Heart right ventricle (tissue), 16 donors: ENCODE measurements at regions of chr2 and their contacts with region 1.

Region 1: GRCh38 chr2:27798948-27799645 is 27.6 kb downstream of the MRPL33 start:
- DNase-seq: peak in 1 of 2 donors; percentile 61
- ATAC-seq: peak in 7 of 8 donors; percentile 26 to 76 (median 60)
- H3K4me3 ChIP-seq: no peak overlapping the region
- H3K27ac ChIP-seq: peak overlapping the region in 9 of 10 donors; percentile 57 to 98 (median 91)
- H3K4me1 ChIP-seq: peaks cover 9 to 76% (median 55%) of the 10 kb centered on the region in 9 donors
- H3K27me3 ChIP-seq: no peaks in the 10 kb centered on the region
- CTCF ChIP-seq: no peak

Region 2: DNA sequence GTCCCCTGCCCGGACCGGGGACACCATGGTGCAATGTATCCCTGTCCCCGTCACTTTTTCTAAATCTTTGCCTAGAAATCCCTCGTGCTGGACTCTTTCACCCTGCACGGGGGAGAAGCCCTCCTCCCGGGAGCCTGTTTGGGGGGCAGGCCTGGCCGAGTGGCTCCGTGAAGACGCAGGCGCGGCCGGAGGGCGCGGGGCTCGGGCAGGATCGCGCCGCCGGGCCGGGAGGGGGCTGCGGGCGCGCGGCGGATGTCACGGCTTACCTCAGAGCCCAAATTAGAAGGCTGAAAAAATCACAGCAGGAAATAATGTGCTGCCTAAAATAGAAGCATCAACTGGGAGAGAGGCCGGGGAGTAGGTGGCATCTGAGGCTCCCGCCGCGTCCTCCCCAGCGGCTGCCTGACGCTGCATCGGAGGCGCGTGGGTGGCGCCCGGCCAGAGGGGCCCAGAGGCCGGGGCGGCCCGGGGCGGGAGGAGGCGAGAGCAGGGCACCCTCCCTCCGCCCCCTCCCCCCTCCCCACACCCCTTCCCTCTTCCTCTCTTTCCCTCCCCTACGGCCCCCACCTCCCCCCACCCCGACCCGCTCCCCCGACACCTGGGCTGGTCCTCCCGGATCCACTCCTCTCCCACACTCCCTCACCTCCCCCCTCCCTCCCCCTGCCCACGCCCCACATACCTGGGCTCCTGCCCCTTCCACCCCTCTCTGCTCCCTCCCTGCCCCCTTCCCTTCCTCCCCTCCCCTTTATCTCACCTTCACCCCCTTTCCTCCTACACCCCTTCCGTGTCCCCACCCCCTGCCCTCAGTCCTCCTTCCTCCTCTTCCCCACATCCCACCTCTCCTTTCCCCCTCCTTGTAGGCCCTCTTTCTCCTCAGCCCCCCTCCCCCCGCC is 83.5 kb before region 1 on chr2:
- intact Hi-C with region 1: loop called in 1 of 10 experiments (anchors 5 kb)
- DNase-seq: peak; percentile 75 to 82
- ATAC-seq: peak; percentile 88 to 91 (median 89)
- H3K4me3 ChIP-seq: peak overlapping the region; percentile 21 to 57 (median 50)
- H3K27ac ChIP-seq: peak overlapping the region; percentile 76 to 99 (median 93)
- H3K4me1 ChIP-seq: peaks cover 9 to 50% (median 27%) of the 10 kb centered on the region in 9 donors
- H3K27me3 ChIP-seq: peaks cover 0 to 28% (median 0%) of the 10 kb centered on the region in 7 donors
- CTCF ChIP-seq: no peak

Region 3: DNA sequence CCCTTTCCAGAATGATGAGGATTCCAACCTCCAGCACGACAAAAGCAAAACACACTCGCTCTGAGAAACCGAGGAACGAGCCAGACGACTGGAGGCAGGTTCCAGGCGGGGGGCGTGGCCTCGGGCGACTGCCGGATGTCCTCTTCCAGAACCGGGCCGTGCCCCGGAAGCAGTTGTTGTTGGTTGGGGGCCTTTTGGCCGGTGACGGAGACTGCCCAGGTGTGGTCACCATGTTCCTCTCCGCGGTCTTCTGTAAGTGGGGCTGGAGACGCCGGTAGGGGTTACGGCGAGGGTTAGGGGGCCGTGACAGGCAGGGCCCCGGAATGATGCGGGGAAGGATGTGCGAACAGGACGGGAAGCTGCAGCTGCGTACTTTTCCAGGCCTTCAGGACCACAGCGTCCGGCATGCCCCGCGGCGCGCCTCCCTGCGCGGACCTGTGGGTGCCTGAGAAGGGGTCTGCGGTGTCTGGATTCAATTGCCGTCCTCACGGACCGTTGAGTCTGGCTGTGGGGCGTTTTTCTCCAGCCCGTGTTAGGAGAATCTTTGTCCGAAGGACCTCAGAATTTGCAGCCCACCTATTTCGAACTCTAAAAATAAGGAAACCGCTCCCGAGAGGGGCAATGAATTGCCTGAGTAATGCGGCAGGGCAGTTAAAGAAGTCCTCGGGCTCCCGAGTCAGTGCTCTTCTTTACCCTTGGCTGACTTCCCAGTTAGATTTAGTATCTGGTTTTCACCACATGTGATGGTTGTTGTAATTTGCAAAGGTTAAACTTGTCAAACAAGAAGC is 27.4 kb before region 1 on chr2 and contains the start of gene MRPL33:
- intact Hi-C with region 1: loop called in 1 of 10 experiments (anchors 1 kb)
- DNase-seq: peak; percentile 95
- ATAC-seq: peak; percentile 97 to 98 (median 98)
- H3K4me3 ChIP-seq: peak within 1 kb of the TSS; percentile 50 to 90 (median 73)
- H3K27ac ChIP-seq: peak within 1 kb of the TSS; percentile 62 to 96 (median 92)
- H3K4me1 ChIP-seq: peaks cover 5 to 51% (median 41%) of the 10 kb centered on the region in 9 donors
- H3K27me3 ChIP-seq: no peaks in the 10 kb centered on the region
- CTCF ChIP-seq: no peak
- total RNA-seq, gene MRPL33: 170 to 416 (median 253) TPM

Region 4: GRCh38 chr2:27779417-27780055 is 19.6 kb before region 1 on chr2:
- intact Hi-C with region 1: loop called in 2 of 10 experiments (anchors 1 to 2 kb)
- DNase-seq: no peak
- ATAC-seq: peak in 6 of 8 donors; percentile 39 to 79 (median 62)
- H3K4me3 ChIP-seq: no peak overlapping the region
- H3K27ac ChIP-seq: peak overlapping the region; percentile 46 to 95 (median 70)
- H3K4me1 ChIP-seq: peaks cover 0 to 86% (median 41%) of the 10 kb centered on the region in 9 donors
- H3K27me3 ChIP-seq: no peaks in the 10 kb centered on the region
- CTCF ChIP-seq: no peak

Region 5: GRCh38 chr2:28152585-28153280 is 353.6 kb after region 1 on chr2:
- intact Hi-C with region 1: no loop called
- DNase-seq: no peak
- ATAC-seq: no peak
- H3K4me3 ChIP-seq: no peak overlapping the region
- H3K27ac ChIP-seq: no peak overlapping the region
- H3K4me1 ChIP-seq: peaks cover 0 to 7% (median 0%) of the 10 kb centered on the region in 9 donors
- H3K27me3 ChIP-seq: no peaks in the 10 kb centered on the region
- CTCF ChIP-seq: no peak